Pancreas (tissue), 10 donors: ENCODE measurements at regions of chr20 and their contacts with region 1.

Region 1: GRCh38 chr20:815914-816606 is 17.5 kb upstream of the FAM110A start:
- DNase-seq: peak in 4 of 6 donors; percentile 19 to 74 (median 56)
- ATAC-seq: peak; percentile 35 to 90 (median 78)
- H3K4me3 ChIP-seq: no peak overlapping the region
- H3K27ac ChIP-seq: no peak overlapping the region
- H3K4me1 ChIP-seq: no peaks in the 10 kb centered on the region
- H3K27me3 ChIP-seq: no peaks in the 10 kb centered on the region
- CTCF ChIP-seq: peak; percentile 90 to 95 (median 94)

Region 2: GRCh38 chr20:956330-956951 is 140.4 kb after region 1 on chr20:
- intact Hi-C with region 1: loop called (anchors 2 to 10 kb)
- DNase-seq: peak; percentile 25 to 84 (median 60)
- ATAC-seq: peak in 3 of 4 donors; percentile 89 to 94 (median 91)
- H3K4me3 ChIP-seq: no peak overlapping the region
- H3K27ac ChIP-seq: no peak overlapping the region
- H3K4me1 ChIP-seq: no peaks in the 10 kb centered on the region
- H3K27me3 ChIP-seq: peaks cover 0 to 22% (median 0%) of the 10 kb centered on the region in 4 donors
- CTCF ChIP-seq: peak; percentile 66 to 95 (median 93)

Region 3: GRCh38 chr20:967796-968742 is 152.0 kb after region 1 on chr20:
- intact Hi-C with region 1: loop called in 1 of 3 experiments (anchors 10 kb)
- DNase-seq: no peak
- ATAC-seq: no peak
- H3K4me3 ChIP-seq: no peak overlapping the region
- H3K27ac ChIP-seq: no peak overlapping the region
- H3K4me1 ChIP-seq: no peaks in the 10 kb centered on the region
- H3K27me3 ChIP-seq: no peaks in the 10 kb centered on the region
- CTCF ChIP-seq: no peak

Region 4: DNA sequence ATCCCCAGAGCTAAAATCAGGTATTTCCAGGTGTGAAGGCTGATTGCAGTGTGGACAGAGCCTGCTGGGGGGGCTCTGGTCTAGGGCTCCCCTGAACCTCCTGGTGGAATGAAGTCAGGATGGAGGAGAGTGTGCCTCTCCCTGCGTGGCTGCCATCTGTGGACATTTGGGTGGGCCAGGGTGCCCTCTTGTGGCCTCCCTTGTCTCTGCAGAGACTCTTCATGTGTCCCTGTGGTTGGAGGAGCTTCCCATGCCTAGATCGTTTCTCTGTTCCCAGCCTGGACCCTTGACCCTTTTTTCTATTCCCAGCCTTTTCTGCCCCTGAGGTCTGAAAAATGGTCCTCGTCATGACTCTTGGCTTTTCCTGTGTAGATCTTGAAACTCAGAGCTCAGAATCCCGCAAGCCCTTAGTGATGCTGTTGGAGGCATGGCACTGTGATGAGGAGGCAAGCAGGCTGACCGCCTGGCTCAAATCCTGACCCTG is 292.4 kb after region 1 on chr20:
- intact Hi-C with region 1: loop called in 1 of 3 experiments (anchors 10 kb)
- DNase-seq: peak in 5 of 6 donors; percentile 18 to 78 (median 57)
- ATAC-seq: peak; percentile 66 to 95 (median 89)
- H3K4me3 ChIP-seq: no peak overlapping the region
- H3K27ac ChIP-seq: no peak overlapping the region
- H3K4me1 ChIP-seq: no peaks in the 10 kb centered on the region
- H3K27me3 ChIP-seq: no peaks in the 10 kb centered on the region
- CTCF ChIP-seq: peak; percentile 60 to 74 (median 64)

Region 5: DNA sequence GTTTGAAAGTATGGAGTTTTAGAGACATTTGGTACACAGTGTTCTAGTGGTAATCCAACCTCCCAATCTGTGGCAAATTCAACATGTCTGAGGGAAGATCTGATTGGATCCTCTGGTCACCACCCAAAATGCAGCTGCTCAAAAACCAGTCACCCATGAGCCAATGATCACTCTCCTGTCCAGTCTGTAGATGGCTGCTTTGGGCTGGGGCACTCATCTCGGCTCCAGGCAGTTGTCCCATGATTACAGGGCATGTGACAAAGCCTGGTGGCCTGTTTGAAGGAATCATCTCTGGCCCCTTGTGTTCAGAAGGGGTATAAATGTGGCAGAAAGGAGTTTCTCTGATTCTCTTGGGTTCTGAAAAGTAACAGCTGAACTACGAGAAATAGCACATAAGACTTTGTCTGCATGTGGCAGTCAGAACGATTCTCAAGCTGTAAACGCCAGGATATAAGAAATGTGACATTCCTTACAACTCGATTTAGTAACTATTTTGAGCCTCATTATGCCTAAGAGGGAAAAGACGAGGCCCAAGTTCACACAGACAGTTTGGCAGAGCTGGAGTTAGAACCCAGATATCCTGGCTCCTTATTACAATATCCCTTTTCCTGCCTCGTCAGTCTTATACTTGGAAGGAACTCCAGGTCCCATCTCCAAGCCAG is 383.3 kb after region 1 on chr20:
- intact Hi-C with region 1: loop called in 1 of 3 experiments (anchors 10 kb)
- DNase-seq: no peak
- ATAC-seq: no peak
- H3K4me3 ChIP-seq: no peak overlapping the region
- H3K27ac ChIP-seq: no peak overlapping the region
- H3K4me1 ChIP-seq: no peaks in the 10 kb centered on the region
- H3K27me3 ChIP-seq: no peaks in the 10 kb centered on the region
- CTCF ChIP-seq: no peak